CD8-positive, alpha-beta T cell (primary cell): ENCODE measurements at regions of chr12 and their contacts with region 1.

Region 1: DNA sequence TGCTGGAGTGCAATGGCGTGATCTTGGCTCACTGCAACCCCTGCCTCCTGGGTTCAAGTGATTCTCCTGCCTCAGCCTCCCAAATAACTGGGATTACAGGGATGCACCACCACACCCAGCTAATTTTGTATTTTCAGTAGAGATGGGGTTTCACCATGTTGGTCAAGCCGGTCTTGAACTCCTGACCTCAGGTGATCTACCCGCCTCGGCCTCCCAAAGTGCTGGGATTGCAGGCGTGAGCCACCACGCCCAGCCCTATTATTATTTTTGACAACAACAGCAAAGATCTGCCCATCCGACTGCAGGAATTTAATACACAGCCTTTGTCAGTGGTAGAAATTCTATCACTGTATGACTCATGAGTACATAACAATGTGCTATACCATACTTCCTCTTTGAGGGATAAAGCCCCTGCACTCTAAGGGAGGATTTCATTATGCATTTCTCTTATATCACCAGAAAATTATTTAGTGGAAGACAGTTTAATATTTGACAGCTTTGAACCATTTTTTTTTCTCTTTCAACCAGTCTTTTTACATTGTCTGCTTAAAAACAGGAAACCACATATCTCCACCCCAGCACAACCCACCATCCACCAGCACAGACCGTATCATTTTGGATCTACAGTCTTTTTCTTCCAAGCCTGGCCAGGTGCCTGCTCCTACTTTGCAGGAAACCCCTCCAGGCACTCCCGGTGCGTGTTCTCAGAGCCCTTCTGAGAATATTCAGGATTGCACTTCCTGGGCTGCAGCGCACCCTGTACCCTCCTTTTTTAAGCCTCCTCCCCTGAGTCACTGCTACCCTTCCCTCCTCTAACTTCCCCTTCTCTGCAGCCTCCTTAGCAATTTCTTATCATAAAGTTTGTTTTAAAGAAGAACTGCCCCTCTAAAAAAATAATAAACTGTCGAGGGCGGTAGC is 594 bp downstream of the ARHGDIB start:
- DNase-seq: peak in 8 of 9 experiments; percentile 37 to 82 (median 60)
- ATAC-seq: peak; percentile 37
- H3K4me3 ChIP-seq: peak overlapping the region; percentile 71 to 85
- H3K4me3 Mint-ChIP-seq: peak overlapping the region; percentile 100
- H3K27ac ChIP-seq: peak overlapping the region; percentile 90 to 96
- H3K27ac Mint-ChIP-seq: peak overlapping the region; percentile 99
- H3K4me1 ChIP-seq: peaks cover 49% of the 10 kb centered on the region
- H3K4me1 Mint-ChIP-seq: peaks cover 71% of the 10 kb centered on the region
- H3K27me3 ChIP-seq: no peaks in the 10 kb centered on the region
- H3K27me3 Mint-ChIP-seq: no peaks in the 10 kb centered on the region
- CTCF ChIP-seq: no peak

Region 2: GRCh38 chr12:14803011-14803829 is 157.6 kb before region 1 on chr12 and contains the starts of genes C12orf60 and WBP11:
- CTCF ChIA-PET with region 1: interaction called, 6 read pairs
- POLR2A ChIA-PET with region 1: no interaction called
- intact Hi-C with region 1: loop called in 1 of 2 experiments (anchors 1 kb)
- DNase-seq: peak; percentile 76 to 98 (median 87)
- ATAC-seq: peak; percentile 94
- H3K4me3 ChIP-seq: peak within 1 kb of the TSS; percentile 86 to 95
- H3K4me3 Mint-ChIP-seq: no peak within 1 kb of the TSS
- H3K27ac ChIP-seq: peak within 1 kb of the TSS; percentile 91 to 98
- H3K27ac Mint-ChIP-seq: no peak within 1 kb of the TSS
- H3K4me1 ChIP-seq: peaks cover 28% of the 10 kb centered on the region
- H3K4me1 Mint-ChIP-seq: peaks cover 12% of the 10 kb centered on the region
- H3K27me3 ChIP-seq: no peaks in the 10 kb centered on the region
- H3K27me3 Mint-ChIP-seq: no peaks in the 10 kb centered on the region
- CTCF ChIP-seq: no peak
- total RNA-seq, gene C12orf60: 0.14 TPM in 1 of 2 experiments, not detected in the other
- total RNA-seq, gene WBP11: 171 to 184 TPM

Region 3: DNA sequence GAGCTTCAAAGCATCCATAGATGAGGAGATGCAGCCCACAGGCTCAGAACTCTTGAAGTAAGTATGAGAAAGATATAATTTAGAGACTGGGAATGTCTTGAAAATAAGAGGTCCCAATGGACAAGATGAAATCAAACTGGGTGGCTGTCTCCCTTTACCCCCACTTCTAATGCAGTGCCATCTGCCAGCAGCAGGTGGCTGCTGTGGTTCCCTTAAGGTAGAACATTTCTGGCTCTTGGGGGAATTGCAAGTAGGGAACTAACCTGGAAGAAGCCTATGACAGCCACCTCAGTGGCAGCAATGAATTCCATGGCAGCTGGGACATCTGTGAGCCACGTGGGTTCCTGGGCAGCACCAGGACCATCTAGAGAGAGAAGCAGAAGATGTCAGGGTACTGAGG is 23.1 kb before region 1 on chr12:
- CTCF ChIA-PET with region 1: interaction called, 12 read pairs
- POLR2A ChIA-PET with region 1: interaction called, 9 read pairs
- intact Hi-C with region 1: no loop called
- DNase-seq: peak in 2 of 9 experiments; percentile 58 to 66
- ATAC-seq: peak; percentile 58
- H3K4me3 ChIP-seq: no peak overlapping the region
- H3K4me3 Mint-ChIP-seq: no peak overlapping the region
- H3K27ac ChIP-seq: peak overlapping the region in 1 of 2 experiments; percentile 55
- H3K27ac Mint-ChIP-seq: peak overlapping the region; percentile 85
- H3K4me1 ChIP-seq: peaks cover 38% of the 10 kb centered on the region
- H3K4me1 Mint-ChIP-seq: peaks cover 74% of the 10 kb centered on the region
- H3K27me3 ChIP-seq: no peaks in the 10 kb centered on the region
- H3K27me3 Mint-ChIP-seq: no peaks in the 10 kb centered on the region
- CTCF ChIP-seq: peak; percentile 40

Region 4: GRCh38 chr12:14981049-14981448 is 20.2 kb after region 1 on chr12:
- CTCF ChIA-PET with region 1: interaction called, 3 read pairs
- POLR2A ChIA-PET with region 1: interaction called, 7 read pairs
- intact Hi-C with region 1: loop called (anchors 2 kb)
- DNase-seq: peak in 1 of 9 experiments; percentile 43
- ATAC-seq: no peak
- H3K4me3 ChIP-seq: no peak overlapping the region
- H3K4me3 Mint-ChIP-seq: no peak overlapping the region
- H3K27ac ChIP-seq: no peak overlapping the region
- H3K27ac Mint-ChIP-seq: no peak overlapping the region
- H3K4me1 ChIP-seq: peaks cover 59% of the 10 kb centered on the region
- H3K4me1 Mint-ChIP-seq: peaks cover 72% of the 10 kb centered on the region
- H3K27me3 ChIP-seq: no peaks in the 10 kb centered on the region
- H3K27me3 Mint-ChIP-seq: no peaks in the 10 kb centered on the region
- CTCF ChIP-seq: no peak

Region 5: DNA sequence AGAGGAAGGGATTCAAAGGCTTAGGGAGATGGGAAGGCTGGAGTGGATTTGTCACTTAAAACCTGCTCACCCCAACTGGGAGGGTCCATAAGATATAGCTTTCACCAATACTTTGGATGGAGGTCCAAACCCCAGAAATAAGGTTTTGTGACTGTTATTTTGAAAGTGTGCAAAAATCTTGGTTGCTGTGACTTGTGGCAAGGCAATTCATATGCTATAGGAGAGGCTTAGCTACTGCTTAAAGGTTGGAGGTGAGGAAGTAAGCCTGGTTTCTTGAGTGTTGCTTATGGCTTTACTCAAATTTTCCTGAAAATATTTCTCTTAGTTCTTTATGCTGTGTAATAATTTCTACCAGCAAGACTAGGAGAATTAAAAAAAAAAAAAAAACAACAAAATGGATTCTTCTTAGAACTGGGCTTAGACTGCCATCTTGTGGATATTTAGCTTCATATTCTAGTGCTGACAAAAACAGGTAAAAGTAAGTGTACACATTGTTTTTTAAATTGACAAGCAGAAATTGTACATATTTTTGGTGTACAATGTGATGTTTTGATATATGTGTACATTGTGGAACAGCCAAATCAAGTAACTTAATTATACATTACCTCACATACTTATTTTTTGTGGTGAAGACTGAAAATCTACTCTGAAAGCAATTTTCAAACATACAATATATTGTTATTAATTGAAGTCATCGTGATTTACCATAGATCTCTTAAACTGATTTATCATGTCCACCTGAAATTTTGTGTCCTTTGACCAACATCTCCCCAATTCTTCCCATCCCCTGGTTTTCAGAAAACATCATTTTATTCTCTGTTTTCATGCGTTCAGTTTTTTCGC is 35.0 kb after region 1 on chr12:
- CTCF ChIA-PET with region 1: interaction called, 21 read pairs
- POLR2A ChIA-PET with region 1: interaction called, 14 read pairs
- intact Hi-C with region 1: loop called (anchors 1 to 2 kb)
- DNase-seq: peak in 2 of 9 experiments; percentile 78 to 85
- ATAC-seq: peak; percentile 70
- H3K4me3 ChIP-seq: no peak overlapping the region
- H3K4me3 Mint-ChIP-seq: peak overlapping the region; percentile 20
- H3K27ac ChIP-seq: no peak overlapping the region
- H3K27ac Mint-ChIP-seq: peak overlapping the region; percentile 63
- H3K4me1 ChIP-seq: peaks cover 29% of the 10 kb centered on the region
- H3K4me1 Mint-ChIP-seq: peaks cover 31% of the 10 kb centered on the region
- H3K27me3 ChIP-seq: no peaks in the 10 kb centered on the region
- H3K27me3 Mint-ChIP-seq: peaks cover 2% of the 10 kb centered on the region
- CTCF ChIP-seq: peak; percentile 75

Region 6: DNA sequence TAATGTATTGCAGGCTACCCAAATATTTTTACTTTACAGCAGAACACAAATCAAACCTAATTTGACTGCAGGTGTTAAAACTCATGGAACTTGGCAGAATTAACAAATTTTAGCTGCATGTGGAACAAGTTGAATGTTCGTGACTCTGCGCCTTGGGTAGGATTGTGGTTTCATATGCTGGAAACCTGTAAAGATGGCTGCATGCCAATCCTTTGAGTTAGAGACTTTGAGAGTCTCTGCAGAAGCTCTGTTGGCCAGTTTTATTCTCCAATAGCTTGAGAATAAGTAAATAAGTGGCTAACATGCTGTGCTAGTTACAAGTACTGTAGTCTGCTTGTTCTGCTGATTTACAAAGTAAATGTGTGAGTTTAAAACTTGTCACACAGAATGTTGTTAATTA is 89.9 kb after region 1 on chr12:
- CTCF ChIA-PET with region 1: no interaction called
- POLR2A ChIA-PET with region 1: no interaction called
- intact Hi-C with region 1: no loop called
- DNase-seq: peak in 3 of 9 experiments; percentile 24 to 56 (median 33)
- ATAC-seq: peak; percentile 73
- H3K4me3 ChIP-seq: no peak overlapping the region
- H3K4me3 Mint-ChIP-seq: no peak overlapping the region
- H3K27ac ChIP-seq: no peak overlapping the region
- H3K27ac Mint-ChIP-seq: peak overlapping the region; percentile 39
- H3K4me1 ChIP-seq: peaks cover 4% of the 10 kb centered on the region
- H3K4me1 Mint-ChIP-seq: peaks cover 16% of the 10 kb centered on the region
- H3K27me3 ChIP-seq: no peaks in the 10 kb centered on the region
- H3K27me3 Mint-ChIP-seq: peaks cover 6% of the 10 kb centered on the region
- CTCF ChIP-seq: no peak